ENCODE measurements at regions of chr10 and their contacts with region 1.

Region 1: DNA sequence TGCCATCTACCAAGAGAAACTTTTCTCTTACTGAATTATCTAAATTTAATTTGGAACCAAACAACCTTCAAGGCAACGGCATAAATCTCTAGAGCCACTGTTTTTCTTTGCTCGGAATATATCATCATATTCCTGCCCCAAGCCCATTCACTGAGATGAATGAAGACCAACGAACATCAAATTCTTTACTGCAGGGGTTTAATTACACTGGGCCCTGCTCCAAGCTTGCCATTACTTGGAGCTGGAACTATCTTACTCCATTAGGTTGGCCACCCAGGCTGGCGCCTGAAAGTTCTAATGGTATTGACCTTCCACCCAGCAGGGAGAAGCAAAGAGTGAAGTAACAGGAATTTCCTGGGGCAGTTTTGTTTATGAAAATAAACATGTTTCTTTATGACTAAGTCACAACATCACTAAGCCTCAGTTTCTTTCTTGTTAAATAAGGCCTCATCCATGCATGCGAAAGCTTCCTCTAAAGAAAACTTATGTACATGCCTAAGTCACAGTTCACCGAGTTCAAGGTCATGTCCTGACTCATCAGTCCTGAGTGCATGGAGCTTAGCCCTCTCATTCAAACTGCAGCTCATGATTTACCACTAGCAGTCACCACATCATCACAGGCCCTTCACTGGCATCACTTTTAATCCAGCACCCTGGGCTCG is 42.0 kb upstream of the ANAPC16 start:
- DNase-seq: no peak
- ATAC-seq: no peak
- H3K4me3 ChIP-seq: no peak overlapping the region
- H3K27ac ChIP-seq: peak overlapping the region in 11 of 12 donors; percentile 20 to 75 (median 60)
- H3K4me1 ChIP-seq: peaks cover 0 to 51% (median 21%) of the 10 kb centered on the region in 12 donors
- H3K27me3 ChIP-seq: no peaks in the 10 kb centered on the region
- CTCF ChIP-seq: no peak
- POLR2A ChIP-seq: no peak

Region 2: DNA sequence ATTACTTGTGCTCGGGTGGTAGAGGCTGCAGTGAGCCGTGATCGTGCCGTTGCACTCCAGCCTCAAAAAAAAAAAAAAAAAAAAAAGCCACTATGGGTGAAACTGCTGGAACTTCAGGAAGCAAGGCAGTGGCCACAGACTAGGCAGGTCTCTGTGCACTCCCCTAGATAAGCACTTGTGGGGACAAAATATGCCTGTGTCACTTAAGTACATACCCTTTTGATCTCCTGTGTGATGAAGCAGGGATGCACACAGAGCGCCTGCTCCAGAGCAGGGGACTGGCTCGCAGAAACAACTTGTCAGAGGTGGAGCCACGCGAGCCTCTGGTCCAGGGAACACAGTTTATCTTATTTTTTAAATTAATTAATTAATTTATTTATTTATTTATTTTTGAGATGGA is 279.8 kb before region 1 on chr10:
- intact Hi-C with region 1: no loop called
- DNase-seq: no peak
- ATAC-seq: no peak
- H3K4me3 ChIP-seq: no peak overlapping the region
- H3K27ac ChIP-seq: no peak overlapping the region
- H3K4me1 ChIP-seq: peaks cover 0 to 54% (median 7%) of the 10 kb centered on the region in 12 donors
- H3K27me3 ChIP-seq: no peaks in the 10 kb centered on the region
- CTCF ChIP-seq: no peak
- POLR2A ChIP-seq: no peak

Region 3: GRCh38 chr10:72107325-72108003 is 66.3 kb before region 1 on chr10:
- intact Hi-C with region 1: loop called in 1 of 10 experiments (anchors 10 kb)
- DNase-seq: no peak
- ATAC-seq: no peak
- H3K4me3 ChIP-seq: no peak overlapping the region
- H3K27ac ChIP-seq: peak overlapping the region in 3 of 12 donors; percentile 2 to 71 (median 57)
- H3K4me1 ChIP-seq: peaks cover 0 to 45% (median 25%) of the 10 kb centered on the region in 12 donors
- H3K27me3 ChIP-seq: no peaks in the 10 kb centered on the region
- CTCF ChIP-seq: no peak
- POLR2A ChIP-seq: no peak

Measured in heart left ventricle (tissue), 16 donors.